Vagina (tissue), 2 donors: ENCODE measurements at regions of chr2 and their contacts with region 1.

Region 1: DNA sequence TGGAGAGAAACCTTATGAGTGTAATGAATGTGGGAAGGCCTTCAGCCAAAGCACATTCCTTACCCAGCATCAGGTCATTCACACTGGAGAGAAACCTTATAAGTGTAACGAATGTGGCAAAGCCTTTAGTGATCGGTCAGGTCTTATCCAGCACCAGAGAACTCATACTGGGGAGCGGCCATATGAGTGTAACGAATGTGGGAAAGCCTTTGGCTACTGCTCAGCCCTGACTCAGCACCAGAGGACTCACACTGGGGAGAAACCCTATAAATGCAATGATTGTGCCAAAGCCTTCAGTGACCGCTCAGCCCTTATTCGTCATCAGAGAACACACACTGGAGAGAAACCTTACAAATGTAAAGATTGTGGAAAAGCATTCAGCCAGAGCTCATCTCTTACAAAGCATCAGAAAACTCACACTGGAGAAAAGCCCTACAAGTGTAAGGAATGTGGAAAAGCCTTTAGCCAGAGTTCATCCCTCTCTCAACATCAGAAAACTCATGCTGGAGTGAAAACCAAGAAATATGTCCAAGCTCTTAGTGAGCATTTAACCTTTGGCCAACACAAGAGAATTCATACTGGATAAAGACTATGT is 7.8 kb downstream of the ZNF892 start:
- DNase-seq: no peak
- H3K4me3 ChIP-seq: no peak overlapping the region
- H3K27ac ChIP-seq: no peak overlapping the region
- H3K4me1 ChIP-seq: no peaks in the 10 kb centered on the region
- H3K27me3 ChIP-seq: no peaks in the 10 kb centered on the region
- CTCF ChIP-seq: no peak
- POLR2A ChIP-seq: no peak

Region 2: DNA sequence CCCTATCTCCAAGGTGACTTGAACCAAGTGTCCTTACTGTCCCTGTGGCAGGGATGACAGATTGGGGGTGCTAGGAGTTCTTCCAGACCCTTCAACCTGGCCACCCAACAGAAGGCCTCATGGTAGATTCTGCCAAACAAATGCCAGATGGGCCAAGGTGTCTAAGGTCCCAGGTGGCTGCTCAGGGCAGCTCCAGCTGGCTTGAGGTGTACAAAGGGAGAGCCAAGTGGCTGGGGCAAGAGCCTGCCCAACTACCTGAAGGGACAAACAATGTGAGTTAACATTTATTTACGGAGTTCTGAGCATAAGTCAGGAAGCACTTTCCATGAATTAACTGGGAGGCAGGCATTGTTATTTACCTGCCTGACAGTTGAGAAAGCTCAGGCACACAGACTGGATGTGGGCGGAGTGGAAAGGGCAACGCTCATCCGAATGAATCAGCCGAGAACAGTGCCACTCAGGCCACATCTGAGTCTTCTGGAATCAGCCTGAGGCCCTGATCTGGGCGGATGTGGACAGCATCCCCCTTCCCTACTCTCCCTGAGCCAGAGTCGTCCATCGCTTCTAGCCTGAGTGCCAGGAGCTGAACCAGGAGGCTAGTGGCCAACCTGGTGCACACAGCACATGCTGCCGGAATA is 77.6 kb after region 1 on chr2:
- intact Hi-C with region 1: loop called (anchors 5 kb)
- DNase-seq: no peak
- H3K4me3 ChIP-seq: no peak overlapping the region
- H3K27ac ChIP-seq: no peak overlapping the region
- H3K4me1 ChIP-seq: peaks cover 7% of the 10 kb centered on the region
- H3K27me3 ChIP-seq: no peaks in the 10 kb centered on the region
- CTCF ChIP-seq: no peak
- POLR2A ChIP-seq: no peak

Region 3: GRCh38 chr2:95514718-95515117 is 299.6 kb after region 1 on chr2:
- intact Hi-C with region 1: no loop called
- DNase-seq: no peak
- H3K4me3 ChIP-seq: no peak overlapping the region
- H3K27ac ChIP-seq: no peak overlapping the region
- H3K4me1 ChIP-seq: no peaks in the 10 kb centered on the region
- H3K27me3 ChIP-seq: no peaks in the 10 kb centered on the region
- CTCF ChIP-seq: no peak
- POLR2A ChIP-seq: no peak